Mammary epithelial cell (primary cell): ENCODE measurements at regions of chr2 and their contacts with region 1.

Region 1: DNA sequence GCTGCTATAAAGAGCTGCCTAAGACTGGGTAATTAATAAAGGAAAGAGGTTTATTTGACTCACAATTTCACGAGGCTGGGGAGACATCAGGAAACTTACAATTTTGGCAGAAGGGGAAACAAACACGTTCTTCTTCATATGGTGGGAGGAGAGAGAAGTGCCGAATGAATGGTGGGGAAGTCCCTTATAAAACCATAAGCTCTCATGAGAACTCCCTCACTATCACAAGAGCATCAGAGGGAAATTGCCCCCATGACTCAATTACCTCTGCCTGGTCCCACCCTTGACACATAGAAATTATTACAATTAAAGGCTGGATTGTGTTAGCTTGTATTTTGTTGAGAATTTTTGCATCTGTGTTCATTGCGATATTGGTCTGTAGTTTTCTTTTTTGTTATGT is 460.5 kb upstream of the RAB6C start:
- DNase-seq: no peak
- H3K4me3 ChIP-seq: no peak overlapping the region
- H3K27ac ChIP-seq: no peak overlapping the region
- H3K4me1 ChIP-seq: no peaks in the 10 kb centered on the region
- H3K27me3 ChIP-seq: no peaks in the 10 kb centered on the region
- CTCF ChIP-seq: no peak

Region 2: GRCh38 chr2:129611471-129611870 is 92.5 kb after region 1 on chr2:
- CTCF ChIA-PET with region 1: no interaction called
- dilution Hi-C with region 1: loop called (anchors 5 kb)
- in situ Hi-C with region 1: no loop called
- intact Hi-C with region 1: no loop called
- DNase-seq: no peak
- H3K4me3 ChIP-seq: no peak overlapping the region
- H3K27ac ChIP-seq: no peak overlapping the region
- H3K4me1 ChIP-seq: no peaks in the 10 kb centered on the region
- H3K27me3 ChIP-seq: no peaks in the 10 kb centered on the region
- CTCF ChIP-seq: no peak